Calu3 (cell line): ENCODE measurements at regions of chr9 and their contacts with region 1.

Region 1: DNA sequence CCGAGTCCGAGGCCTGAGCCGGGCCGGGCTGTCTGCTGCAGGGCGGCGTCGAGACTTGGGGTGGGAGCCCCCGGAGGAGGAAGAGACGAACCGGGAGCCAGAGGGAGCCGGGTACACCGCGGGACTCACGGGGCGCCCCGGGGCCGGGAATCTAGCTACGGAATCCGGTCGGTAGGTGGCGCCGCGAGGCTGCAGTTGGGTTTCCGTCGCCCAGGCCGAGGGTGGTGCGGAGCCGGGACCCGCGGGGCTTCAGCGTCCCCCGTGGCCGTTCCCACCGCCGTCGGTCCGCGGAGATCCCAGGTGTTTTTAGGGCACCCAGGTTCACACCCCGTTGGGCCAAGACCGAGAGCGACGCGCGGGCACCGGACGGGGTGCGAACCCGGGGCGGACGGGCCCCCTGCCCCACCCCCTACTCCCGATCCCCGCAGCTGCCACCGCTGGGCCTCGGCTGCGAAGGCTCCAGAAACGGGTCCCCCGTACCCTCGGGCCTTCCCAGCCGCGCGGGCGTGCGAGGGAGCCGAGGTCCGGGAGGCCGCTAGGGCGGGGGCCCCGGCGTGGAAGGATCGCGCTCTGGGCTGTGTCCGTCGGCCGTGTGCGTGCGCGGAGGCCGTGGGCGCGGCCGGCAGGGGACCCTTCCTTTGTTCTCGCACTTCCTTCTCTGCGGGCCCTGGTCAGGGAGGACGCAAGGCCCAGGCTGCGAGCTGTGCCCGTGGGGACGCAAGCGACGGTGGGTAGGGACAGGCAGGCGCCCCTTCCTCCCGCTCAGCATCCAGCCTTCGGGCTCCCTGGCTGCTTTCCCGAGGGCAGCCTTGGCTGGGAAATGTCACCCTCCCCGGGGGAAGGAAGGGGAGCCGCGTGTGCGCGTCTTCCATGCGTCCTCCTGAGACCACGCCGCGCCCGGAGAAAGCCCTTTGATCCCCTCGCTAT is 146.6 kb downstream of the GAPVD1 start:
- DNase-seq: peak; percentile 80
- H3K4me3 Mint-ChIP-seq: peak overlapping the region; percentile 61
- H3K27ac Mint-ChIP-seq: no peak overlapping the region
- H3K4me1 Mint-ChIP-seq: peaks cover 28% of the 10 kb centered on the region
- H3K27me3 Mint-ChIP-seq: peaks cover 32% of the 10 kb centered on the region
- CTCF ChIP-seq: peak; percentile 73

Region 2: DNA sequence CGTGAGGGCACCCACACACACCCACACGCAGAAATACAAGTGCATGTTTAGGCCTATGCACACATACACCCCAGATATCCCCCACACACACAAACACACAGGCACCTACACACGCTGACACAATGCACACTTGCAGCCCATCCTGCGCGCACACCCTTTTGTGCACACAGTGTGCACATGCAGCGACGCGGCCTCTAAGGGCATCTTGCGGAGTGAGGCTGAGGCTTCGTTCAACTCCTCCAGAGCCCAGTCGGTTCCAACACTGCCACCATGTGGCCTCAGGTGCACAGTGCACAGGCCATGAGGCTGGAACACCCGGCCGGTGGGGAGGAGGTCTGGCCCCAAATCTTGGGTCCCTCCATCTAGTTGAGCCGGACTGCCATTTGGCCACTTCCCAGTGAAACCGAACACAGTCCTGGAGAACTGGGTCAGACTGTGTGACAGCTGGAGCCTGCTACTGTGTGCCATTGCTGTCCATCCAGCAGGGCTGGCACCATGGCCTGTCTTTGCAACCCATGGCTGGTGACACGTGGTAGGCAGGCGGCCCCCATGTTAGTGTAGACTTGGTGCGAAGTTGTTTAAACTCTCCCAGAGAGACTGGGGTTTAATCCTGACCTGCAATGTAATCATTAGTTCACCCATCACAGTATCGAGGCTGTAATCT is 820.7 kb after region 1 on chr9:
- CTCF ChIA-PET with region 1: no interaction called
- intact Hi-C with region 1: loop called (anchors 5 kb)
- DNase-seq: peak; percentile 69
- H3K4me3 Mint-ChIP-seq: no peak overlapping the region
- H3K27ac Mint-ChIP-seq: no peak overlapping the region
- H3K4me1 Mint-ChIP-seq: no peaks in the 10 kb centered on the region
- H3K27me3 Mint-ChIP-seq: peaks cover 92% of the 10 kb centered on the region
- CTCF ChIP-seq: peak; percentile 78